Common myeloid progenitor, CD34-positive (primary cell): ENCODE measurements at regions of chr2 and their contacts with region 1.

Region 1: DNA sequence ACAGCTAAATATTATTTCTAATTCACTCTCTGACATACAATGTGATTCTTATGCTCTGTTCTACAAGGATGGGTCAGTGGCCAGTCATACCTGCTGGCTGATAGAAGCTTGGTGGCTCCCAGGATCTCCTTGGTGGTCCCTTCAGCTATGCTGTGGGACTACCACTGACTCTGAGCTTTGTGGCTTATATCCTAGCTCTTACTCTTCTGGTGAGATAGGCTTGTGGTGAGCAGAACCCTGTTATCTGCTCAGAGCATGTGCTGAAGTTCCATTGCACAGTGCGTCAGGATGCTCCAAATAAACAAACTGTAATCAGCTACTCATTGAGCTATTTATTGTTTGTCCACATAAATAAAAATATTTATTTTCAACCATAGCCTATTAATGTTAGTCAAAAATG is 51.7 kb downstream of the MFSD6 start:
- DNase-seq: peak; percentile 61 to 87 (median 73)
- H3K4me3 ChIP-seq: no peak overlapping the region
- H3K27ac ChIP-seq: no peak overlapping the region
- H3K4me1 ChIP-seq: peaks cover 1 to 27% (median 10%) of the 10 kb centered on the region in 4 experiments
- H3K27me3 ChIP-seq: no peaks in the 10 kb centered on the region

Region 2: GRCh38 chr2:190441564-190441963 is 18.3 kb before region 1 on chr2:
- CTCF ChIA-PET with region 1: interaction called, 18 read pairs
- POLR2A ChIA-PET with region 1: no interaction called
- DNase-seq: no peak
- H3K4me3 ChIP-seq: no peak overlapping the region
- H3K27ac ChIP-seq: no peak overlapping the region
- H3K4me1 ChIP-seq: peaks cover 0 to 4% (median 2%) of the 10 kb centered on the region in 4 experiments
- H3K27me3 ChIP-seq: no peaks in the 10 kb centered on the region

Region 3: DNA sequence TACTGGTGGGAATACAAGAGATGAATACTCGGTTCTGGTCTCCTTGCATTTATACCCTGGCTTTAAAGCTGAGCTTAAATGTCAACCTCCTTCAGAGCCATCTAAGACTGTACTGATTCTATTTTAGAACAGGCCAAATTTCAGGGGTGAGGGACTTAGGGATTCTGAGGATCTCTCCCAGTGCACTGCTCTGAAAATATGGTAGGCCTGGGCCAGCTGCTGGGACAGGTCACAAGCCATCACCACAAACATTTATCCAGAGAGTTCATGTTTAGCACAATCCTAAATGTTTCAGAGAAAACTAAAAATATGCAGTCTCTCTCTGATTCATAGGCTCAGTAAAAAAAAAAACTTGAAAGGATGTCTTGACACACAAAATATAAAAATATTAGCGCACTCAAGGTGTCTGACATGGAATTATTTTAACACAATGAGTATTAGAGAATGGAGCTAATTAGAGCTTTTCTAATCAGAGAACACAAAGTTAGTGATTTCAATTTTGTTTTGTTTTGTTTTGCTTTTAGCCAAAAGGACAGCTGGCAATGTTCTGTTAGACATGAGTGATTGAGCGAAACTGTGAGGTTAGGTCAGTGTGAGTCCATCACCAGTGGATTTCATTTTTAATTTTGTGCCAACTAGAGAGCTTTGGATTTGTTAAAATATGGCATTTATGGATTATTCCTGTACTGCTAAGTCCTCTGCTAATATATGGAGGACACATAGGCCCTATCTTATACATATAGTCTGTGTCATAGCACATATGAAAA is 12.9 kb before region 1 on chr2:
- CTCF ChIA-PET with region 1: interaction called, 18 read pairs
- POLR2A ChIA-PET with region 1: no interaction called
- DNase-seq: no peak
- H3K4me3 ChIP-seq: no peak overlapping the region
- H3K27ac ChIP-seq: no peak overlapping the region
- H3K4me1 ChIP-seq: peaks cover 0 to 4% (median 0%) of the 10 kb centered on the region in 4 experiments
- H3K27me3 ChIP-seq: no peaks in the 10 kb centered on the region

Region 4: GRCh38 chr2:190488516-190489233 is 28.8 kb after region 1 on chr2:
- CTCF ChIA-PET with region 1: no interaction called
- POLR2A ChIA-PET with region 1: no interaction called
- DNase-seq: no peak
- H3K4me3 ChIP-seq: no peak overlapping the region
- H3K27ac ChIP-seq: no peak overlapping the region
- H3K4me1 ChIP-seq: no peaks in the 10 kb centered on the region
- H3K27me3 ChIP-seq: no peaks in the 10 kb centered on the region

Region 5: DNA sequence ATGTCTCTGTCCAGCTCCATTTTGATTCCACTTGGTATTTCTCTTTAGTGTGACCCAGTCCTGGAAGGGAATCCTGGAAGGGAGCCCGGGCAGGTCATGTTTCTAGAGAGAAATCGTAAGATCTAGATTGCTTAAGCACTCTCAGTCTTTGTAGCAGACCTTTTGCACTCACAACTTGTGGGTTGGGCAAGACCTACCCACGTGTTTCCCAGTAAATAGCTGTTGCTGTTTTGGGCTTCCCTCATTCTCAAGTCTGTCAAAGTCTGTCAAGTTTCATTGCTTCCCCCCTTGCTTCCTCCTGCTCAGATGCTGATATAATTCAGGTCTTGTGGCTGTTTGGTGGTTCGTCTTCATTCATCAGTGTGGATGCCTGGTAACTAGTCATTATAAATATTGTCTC is 92.0 kb after region 1 on chr2:
- CTCF ChIA-PET with region 1: no interaction called
- POLR2A ChIA-PET with region 1: no interaction called
- DNase-seq: peak in 2 of 3 donors; percentile 62 to 78
- H3K4me3 ChIP-seq: no peak overlapping the region
- H3K27ac ChIP-seq: no peak overlapping the region
- H3K4me1 ChIP-seq: peaks cover 0 to 4% (median 0%) of the 10 kb centered on the region in 4 experiments
- H3K27me3 ChIP-seq: no peaks in the 10 kb centered on the region